Heart left ventricle (tissue), 16 donors: ENCODE measurements at regions of chr16 and their contacts with region 1.

Region 1: GRCh38 chr16:2047330-2048115 is at the starts of genes NTHL1 and TSC2:
- DNase-seq: peak; percentile 97 to 98 (median 98)
- ATAC-seq: peak; percentile 82 to 94 (median 92)
- H3K4me3 ChIP-seq: peak within 1 kb of the TSS; percentile 71 to 99 (median 91)
- H3K27ac ChIP-seq: peak within 1 kb of the TSS; percentile 36 to 94 (median 86)
- H3K4me1 ChIP-seq: peaks cover 14 to 61% (median 47%) of the 10 kb centered on the region in 12 donors
- H3K27me3 ChIP-seq: no peaks in the 10 kb centered on the region
- CTCF ChIP-seq: peak; percentile 24 to 78 (median 54)
- POLR2A ChIP-seq: peak in 1 of 2 donors; percentile 77
- total RNA-seq, gene NTHL1: 9.0 to 25.0 (median 11.7) TPM
- total RNA-seq, gene TSC2: 48.4 to 94.5 (median 70.4) TPM

Region 2: GRCh38 chr16:2063861-2064260 is 16.3 kb after region 1 on chr16:
- intact Hi-C with region 1: loop called in 1 of 10 experiments (anchors 1 kb)
- DNase-seq: no peak
- ATAC-seq: no peak
- H3K4me3 ChIP-seq: no peak overlapping the region
- H3K27ac ChIP-seq: no peak overlapping the region
- H3K4me1 ChIP-seq: no peaks in the 10 kb centered on the region
- H3K27me3 ChIP-seq: no peaks in the 10 kb centered on the region
- CTCF ChIP-seq: no peak
- POLR2A ChIP-seq: no peak

Region 3: DNA sequence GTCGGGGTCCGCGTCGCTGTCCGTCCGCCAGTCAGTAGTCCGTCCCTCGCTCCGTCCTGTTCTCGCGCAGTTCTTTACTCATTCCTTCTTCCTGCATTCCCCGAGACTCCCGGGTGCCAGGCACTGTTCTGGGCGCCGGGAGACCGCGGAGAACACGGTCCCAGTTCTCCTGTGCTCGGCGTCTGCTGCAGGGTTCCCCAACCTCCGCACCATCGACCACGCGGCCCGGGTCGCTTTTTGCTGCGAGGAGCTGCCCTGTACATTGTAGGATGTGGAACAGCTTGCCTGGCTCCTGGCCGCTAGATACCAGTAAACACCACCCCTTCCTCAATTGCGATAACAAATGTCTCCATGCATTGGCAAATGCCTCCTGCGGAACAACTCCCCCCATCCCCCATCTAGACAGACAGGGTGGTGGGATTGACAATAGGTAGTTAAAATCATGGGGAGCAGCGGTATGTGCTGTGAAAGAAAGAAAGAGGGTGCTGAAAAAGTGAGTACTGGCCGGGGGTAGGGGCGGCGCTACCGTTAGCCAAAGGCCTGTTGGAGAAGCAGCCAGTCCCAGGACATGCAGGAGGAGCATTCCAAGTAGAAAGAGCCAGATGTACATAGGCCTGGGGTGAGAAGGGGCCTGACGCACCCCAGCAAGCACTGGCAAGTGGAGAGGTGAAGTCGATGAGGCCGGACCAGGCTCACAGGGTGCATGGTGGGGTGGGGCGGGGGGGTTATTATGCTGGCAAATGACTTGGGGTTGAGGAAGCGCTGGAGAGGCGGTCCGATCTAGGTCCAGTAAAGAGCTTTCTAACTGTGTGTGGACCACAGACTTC is 108.7 kb after region 1 on chr16:
- intact Hi-C with region 1: no loop called
- DNase-seq: no peak
- ATAC-seq: no peak
- H3K4me3 ChIP-seq: peak overlapping the region; percentile 52 to 98 (median 80)
- H3K27ac ChIP-seq: peak overlapping the region in 11 of 12 donors; percentile 20 to 91 (median 67)
- H3K4me1 ChIP-seq: peaks cover 22 to 84% (median 63%) of the 10 kb centered on the region in 12 donors
- H3K27me3 ChIP-seq: no peaks in the 10 kb centered on the region
- CTCF ChIP-seq: no peak
- POLR2A ChIP-seq: no peak

Region 4: DNA sequence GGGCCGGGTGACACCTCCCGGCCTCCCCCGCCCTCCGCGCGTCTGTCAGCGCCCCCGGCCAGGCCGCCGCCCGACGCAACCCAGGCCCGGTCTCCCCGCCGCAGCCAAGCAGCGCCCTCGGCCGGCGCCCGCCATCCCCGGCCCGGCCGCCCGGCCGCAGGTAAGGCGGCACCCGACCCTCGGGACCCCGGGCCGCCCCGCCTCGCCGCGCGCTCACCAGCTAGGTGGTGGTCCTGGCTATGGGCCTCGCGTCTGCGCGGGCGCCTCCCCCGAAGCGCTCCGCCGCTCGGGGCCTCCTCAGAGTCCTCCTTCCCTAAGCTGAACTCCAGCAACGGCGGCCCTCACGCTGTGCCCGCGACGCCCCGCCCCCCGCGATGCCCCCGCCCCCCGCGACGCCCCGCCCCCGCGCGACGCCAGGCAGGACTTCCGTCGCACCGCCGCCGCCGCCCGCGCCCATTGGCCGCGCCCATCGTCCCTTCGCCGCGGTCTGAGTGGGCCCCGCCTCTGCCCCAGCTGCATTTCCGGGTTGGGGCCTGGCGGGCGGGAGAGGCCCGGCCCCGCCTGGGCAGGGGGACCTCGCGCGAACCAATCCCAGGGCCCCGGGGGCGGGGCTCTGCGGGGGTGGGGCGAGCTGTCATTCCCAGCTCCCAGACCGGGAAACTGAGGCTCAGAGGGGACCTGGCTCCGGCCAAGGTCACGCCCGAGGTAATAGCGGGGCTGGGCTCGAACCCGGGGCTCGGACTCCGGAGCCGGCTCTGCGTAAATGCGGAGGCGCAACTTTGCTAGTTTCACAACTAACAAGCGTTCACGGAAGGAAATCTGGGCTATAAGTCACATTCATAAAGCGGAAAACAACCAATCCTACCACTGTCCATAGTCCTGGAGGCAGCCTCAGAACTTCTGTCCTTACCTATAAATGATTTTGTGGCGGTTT is 625.8 kb after region 1 on chr16:
- intact Hi-C with region 1: no loop called
- DNase-seq: peak; percentile 97 to 98 (median 97)
- ATAC-seq: peak; percentile 97 to 98 (median 98)
- H3K4me3 ChIP-seq: peak overlapping the region; percentile 46 to 80 (median 68)
- H3K27ac ChIP-seq: peak overlapping the region; percentile 52 to 89 (median 82)
- H3K4me1 ChIP-seq: peaks cover 5 to 37% (median 25%) of the 10 kb centered on the region in 12 donors
- H3K27me3 ChIP-seq: no peaks in the 10 kb centered on the region
- CTCF ChIP-seq: peak in 1 of 12 donors; percentile 8
- POLR2A ChIP-seq: peak in 1 of 2 donors; percentile 52